HCT116 (cell line): ENCODE measurements at regions of chr19 and their contacts with region 1.

Region 1: DNA sequence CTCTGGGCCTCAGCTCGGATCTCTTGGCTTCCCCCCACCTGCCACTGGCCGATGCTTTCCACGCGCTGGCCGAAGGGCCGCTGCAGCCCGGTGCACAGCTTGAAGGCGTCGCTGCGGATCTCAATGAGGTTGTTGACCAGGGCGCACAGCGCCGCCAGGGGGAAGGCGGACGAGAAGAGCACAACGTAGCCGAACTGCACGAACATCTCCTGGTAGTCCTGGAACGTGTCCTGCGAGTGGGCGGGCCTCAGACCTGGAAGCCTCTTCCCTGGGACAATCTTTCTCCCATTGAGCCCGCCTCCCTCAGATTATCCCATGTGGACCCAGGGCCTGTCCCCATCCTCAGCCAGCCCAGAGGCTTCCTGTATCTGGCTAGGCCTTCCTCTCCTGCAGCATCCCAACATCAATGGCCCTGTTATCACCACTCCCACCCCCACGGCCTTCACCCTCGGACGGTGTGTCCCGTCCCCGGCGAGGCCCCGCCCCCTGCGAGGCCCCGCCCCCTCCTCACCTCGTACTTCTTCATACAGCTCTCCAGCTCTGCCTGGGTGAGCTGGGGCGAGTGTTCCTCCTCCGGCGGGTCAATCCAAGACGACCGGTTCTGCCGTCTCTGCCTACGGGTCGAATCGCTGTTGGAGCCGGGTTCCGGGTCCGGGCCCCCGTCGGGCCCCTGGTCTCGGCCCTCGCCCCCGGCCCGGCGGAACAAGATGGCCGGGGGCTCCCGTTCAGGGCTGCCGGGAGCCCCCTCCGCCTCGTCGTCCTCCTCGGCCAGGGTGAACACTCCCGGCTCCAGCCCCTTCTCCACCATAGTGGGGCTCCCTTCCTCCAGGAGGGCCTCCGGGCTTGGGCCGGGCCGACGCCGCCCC is 6.8 kb downstream of the ANO8 start:
- DNase-seq: peak; percentile 82
- ATAC-seq: peak; percentile 84
- H3K4me3 ChIP-seq: peak overlapping the region; percentile 50 to 65
- H3K27ac ChIP-seq: peak overlapping the region; percentile 90
- H3K4me1 ChIP-seq: peaks cover 11 to 26% of the 10 kb centered on the region in 2 experiments
- H3K27me3 ChIP-seq: no peaks in the 10 kb centered on the region
- CTCF ChIP-seq: peak in 2 of 3 experiments; percentile 54 to 76; a peak in 4 of 6 replicates
- POLR2A ChIP-seq: peak; percentile 42
- RAD21 ChIP-seq: no peak; the same call in 1 of the 2 replicates

Region 2: DNA sequence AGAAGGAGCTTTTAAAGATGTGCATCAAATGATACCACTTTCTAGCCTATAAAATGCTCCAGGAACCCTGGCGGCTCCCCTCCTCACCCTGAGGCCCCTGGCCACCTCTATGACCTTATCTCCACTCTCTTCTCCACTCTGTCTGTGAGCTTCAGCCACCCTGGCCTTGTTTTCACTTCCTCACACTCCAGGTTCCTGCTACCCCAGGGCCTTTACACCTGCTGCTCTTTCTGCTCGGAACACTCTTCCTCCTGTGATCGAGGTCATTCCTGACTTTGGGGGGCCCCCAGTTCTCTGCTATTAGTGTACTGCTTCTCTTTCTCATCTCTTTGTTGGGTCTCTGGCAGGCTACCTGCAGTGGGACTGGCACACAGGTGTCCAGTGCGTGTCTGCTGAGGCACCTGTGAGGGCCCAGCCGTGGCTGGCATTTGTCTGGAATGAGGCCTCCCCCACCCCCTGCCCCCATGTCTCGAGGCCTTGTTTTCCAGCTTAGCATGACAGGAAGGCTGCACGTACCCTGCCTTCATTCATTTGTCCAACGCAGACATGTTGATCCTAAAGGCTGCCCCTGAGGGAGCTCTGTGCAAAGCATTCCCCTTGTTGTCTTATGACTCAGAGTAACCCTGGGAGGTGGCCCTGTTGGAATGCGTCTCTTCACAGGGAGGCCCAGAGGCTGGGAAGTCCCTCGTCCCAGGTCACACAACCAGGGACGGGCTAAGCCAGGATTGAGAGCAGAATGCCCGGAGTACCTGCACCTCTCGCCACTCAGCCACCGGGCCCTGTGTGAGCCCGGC is 16.2 kb before region 1 on chr19:
- CTCF ChIA-PET with region 1: interaction called, 12 read pairs
- POLR2A ChIA-PET with region 1: interaction called, 39 read pairs
- RAD21 ChIA-PET with region 1: interaction called, 3 to 4 read pairs
- intact Hi-C with region 1: no loop called
- DNase-seq: no peak
- ATAC-seq: peak; percentile 41
- H3K4me3 ChIP-seq: peak overlapping the region; percentile 24 to 43
- H3K27ac ChIP-seq: peak overlapping the region; percentile 77
- H3K4me1 ChIP-seq: peaks cover 36 to 56% of the 10 kb centered on the region in 2 experiments
- H3K27me3 ChIP-seq: no peaks in the 10 kb centered on the region
- CTCF ChIP-seq: no peak
- POLR2A ChIP-seq: no peak
- RAD21 ChIP-seq: no peak

Region 3: DNA sequence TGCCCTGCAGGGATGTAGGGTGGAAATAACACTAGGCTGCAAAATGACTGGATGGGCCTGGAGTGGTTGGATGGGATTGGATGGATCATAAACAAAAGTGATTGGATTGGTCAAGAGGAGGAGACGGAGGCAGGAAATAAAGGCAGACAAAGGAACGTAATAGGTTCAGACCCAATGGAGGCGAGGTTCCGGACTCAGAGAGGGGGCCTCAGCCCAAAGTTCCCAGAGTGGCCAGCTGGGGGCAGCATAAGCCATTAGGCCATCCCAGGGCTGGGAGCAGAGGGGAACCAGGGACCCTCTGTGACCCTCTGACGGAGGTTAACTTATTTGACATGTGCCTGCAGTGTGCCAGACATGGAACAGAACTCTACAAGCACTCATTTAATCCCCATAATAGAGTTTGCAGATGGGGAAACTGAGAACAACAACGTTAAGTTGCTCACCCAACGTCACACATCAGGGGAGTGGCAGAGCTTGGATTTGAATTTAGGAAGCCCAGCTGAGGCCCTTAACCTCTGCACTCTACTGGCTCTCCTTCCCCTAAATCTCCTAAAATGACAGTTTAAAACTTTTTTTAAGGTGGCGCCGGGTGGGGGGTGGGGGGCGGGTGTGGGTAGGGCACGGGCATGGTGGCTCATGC is 376.1 kb after region 1 on chr19:
- CTCF ChIA-PET with region 1: no interaction called
- POLR2A ChIA-PET with region 1: no interaction called
- RAD21 ChIA-PET with region 1: no interaction called
- intact Hi-C with region 1: no loop called
- DNase-seq: peak; percentile 64
- ATAC-seq: peak; percentile 84
- H3K4me3 ChIP-seq: no peak overlapping the region
- H3K27ac ChIP-seq: no peak overlapping the region
- H3K4me1 ChIP-seq: no peaks in the 10 kb centered on the region
- H3K27me3 ChIP-seq: no peaks in the 10 kb centered on the region
- CTCF ChIP-seq: peak; percentile 64 to 93 (median 91)
- POLR2A ChIP-seq: no peak
- RAD21 ChIP-seq: peak; percentile 70